ENCODE measurements at regions of chr17 and their contacts with region 1.

Region 1: GRCh38 chr17:21318439-21318838 is 33.9 kb downstream of the MAP2K3 start:
- DNase-seq: no peak
- H3K4me3 ChIP-seq: no peak overlapping the region
- H3K27ac ChIP-seq: no peak overlapping the region
- H3K4me1 ChIP-seq: no peaks in the 10 kb centered on the region
- H3K27me3 ChIP-seq: no peaks in the 10 kb centered on the region
- CTCF ChIP-seq: no peak
- POLR2A ChIP-seq: no peak

Region 2: DNA sequence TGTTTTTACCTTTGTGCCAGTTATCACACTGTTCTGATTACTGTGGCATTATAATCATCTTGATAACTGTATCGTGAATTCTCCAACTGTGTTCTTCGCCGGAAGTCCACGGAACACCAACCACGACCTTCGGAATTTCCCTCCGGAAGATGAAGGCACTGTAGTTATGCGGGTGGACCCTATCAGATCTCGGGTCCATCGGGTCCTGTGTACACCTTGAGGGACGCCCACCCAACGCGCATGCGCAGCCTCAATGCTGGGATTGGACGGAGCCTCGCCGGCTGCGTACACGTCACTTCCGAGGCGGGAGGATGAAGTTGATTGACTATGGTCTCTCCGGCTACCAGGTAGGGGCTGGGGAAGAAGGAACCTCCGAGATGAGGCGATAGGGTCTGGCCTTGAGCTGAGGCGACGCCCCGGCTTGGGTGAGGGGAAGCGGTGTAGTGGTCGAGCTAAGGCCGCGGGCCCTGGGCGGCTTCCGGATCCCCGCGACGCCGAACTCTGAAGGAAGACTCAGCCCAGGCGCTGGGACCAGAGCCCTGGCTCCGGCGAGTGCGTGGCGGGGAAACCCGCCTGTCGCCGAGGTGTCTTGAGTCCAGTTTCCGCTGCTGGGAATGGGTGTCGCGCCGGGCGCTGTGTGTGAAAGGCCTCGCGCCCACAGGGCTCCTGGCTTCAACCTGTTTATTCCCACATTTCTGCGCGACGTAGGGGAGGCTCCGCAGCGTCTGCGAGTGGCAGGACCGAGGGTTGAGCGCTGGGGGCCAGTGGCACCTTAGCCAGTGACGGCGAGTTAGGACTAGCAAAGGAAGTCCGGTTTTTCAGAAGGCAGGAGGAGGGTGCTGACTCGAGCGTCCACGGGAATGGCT is 191.6 kb before region 1 on chr17 and contains the start of gene DHRS7B:
- intact Hi-C with region 1: loop called (anchors 10 kb)
- DNase-seq: peak; percentile 98
- H3K4me3 ChIP-seq: peak within 1 kb of the TSS; percentile 44 to 90 (median 58)
- H3K27ac ChIP-seq: peak within 1 kb of the TSS; percentile 76 to 93 (median 83)
- H3K4me1 ChIP-seq: peaks cover 7 to 8% of the 10 kb centered on the region in 2 donors
- H3K27me3 ChIP-seq: no peaks in the 10 kb centered on the region
- CTCF ChIP-seq: no peak
- POLR2A ChIP-seq: peak in 1 of 2 donors; percentile 89
- total RNA-seq, gene DHRS7B: 34.1 to 74.1 (median 57.1) TPM

Region 3: GRCh38 chr17:21284319-21285163 is 33.9 kb before region 1 on chr17 and contains the start of gene MAP2K3:
- intact Hi-C with region 1: loop called (anchors 5 kb)
- DNase-seq: peak; percentile 100
- H3K4me3 ChIP-seq: peak within 1 kb of the TSS; percentile 57 to 78 (median 72)
- H3K27ac ChIP-seq: peak within 1 kb of the TSS; percentile 94 to 97 (median 94)
- H3K4me1 ChIP-seq: peaks cover 45 to 47% of the 10 kb centered on the region in 2 donors
- H3K27me3 ChIP-seq: no peaks in the 10 kb centered on the region
- CTCF ChIP-seq: no peak
- POLR2A ChIP-seq: peak; percentile 86 to 98
- total RNA-seq, gene MAP2K3: 15.5 to 23.4 (median 21.3) TPM

Region 4: GRCh38 chr17:21397341-21398190 is 79.1 kb after region 1 on chr17:
- intact Hi-C with region 1: no loop called
- DNase-seq: no peak
- H3K4me3 ChIP-seq: no peak overlapping the region
- H3K27ac ChIP-seq: no peak overlapping the region
- H3K4me1 ChIP-seq: no peaks in the 10 kb centered on the region
- H3K27me3 ChIP-seq: no peaks in the 10 kb centered on the region
- CTCF ChIP-seq: no peak
- POLR2A ChIP-seq: no peak

Region 5: GRCh38 chr17:21457051-21458026 is 138.9 kb after region 1 on chr17:
- intact Hi-C with region 1: loop called (anchors 10 kb)
- DNase-seq: peak; percentile 90 to 93
- H3K4me3 ChIP-seq: no peak overlapping the region
- H3K27ac ChIP-seq: no peak overlapping the region
- H3K4me1 ChIP-seq: peaks cover 6% of the 10 kb centered on the region in 2 donors
- H3K27me3 ChIP-seq: no peaks in the 10 kb centered on the region
- CTCF ChIP-seq: peak; percentile 75 to 99 (median 86)
- POLR2A ChIP-seq: no peak

Region 6: DNA sequence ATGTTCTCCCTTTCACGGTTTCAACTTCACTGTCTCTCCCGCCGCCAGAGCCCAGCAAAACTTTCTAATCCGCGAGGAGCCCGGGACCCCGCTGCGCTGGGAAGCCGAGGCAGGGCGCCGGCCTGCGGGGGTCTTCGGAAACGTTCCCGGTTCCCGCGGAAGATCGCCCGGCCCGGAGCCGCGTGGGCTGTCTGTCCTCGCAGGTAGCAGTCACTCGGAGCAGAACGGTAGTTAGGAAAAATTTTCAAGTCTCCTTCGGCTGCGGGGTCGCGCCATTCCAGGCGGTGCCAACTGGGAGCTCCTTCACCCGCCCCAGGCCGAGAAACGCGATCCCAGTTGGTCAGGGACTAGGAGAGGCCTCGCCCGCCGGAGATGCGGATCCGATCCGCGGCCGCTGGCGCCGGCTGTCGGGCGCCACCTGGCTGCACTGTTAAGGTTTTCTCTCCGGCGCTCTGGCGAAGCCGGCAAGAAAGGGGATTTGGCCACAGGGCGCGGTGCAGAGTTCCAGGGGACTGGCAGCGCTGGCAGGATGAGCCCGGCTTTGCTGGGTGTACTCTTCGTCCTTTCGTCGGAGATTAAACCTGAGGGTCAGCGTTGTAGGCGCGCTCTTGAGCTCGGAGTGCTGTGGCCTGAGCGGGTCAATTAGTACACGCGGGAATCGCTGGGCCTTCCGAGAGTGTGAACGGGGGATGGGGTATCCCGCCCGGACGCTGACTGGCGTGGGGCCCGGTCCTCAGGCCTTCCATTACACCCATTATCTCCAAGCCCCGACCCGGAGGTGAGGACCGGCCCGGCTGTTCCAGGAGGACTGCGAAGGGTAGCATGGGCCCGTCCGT is 193.1 kb after region 1 on chr17:
- intact Hi-C with region 1: loop called (anchors 10 kb)
- DNase-seq: peak; percentile 82 to 86
- H3K4me3 ChIP-seq: peak overlapping the region in 1 of 3 donors; percentile 35
- H3K27ac ChIP-seq: peak overlapping the region in 1 of 3 donors; percentile 35
- H3K4me1 ChIP-seq: peaks cover 4% of the 10 kb centered on the region in 2 donors
- H3K27me3 ChIP-seq: no peaks in the 10 kb centered on the region
- CTCF ChIP-seq: peak; percentile 54 to 85 (median 58)
- POLR2A ChIP-seq: no peak